ENCODE measurements at regions of chr10 and their contacts with region 1.

Region 1: DNA sequence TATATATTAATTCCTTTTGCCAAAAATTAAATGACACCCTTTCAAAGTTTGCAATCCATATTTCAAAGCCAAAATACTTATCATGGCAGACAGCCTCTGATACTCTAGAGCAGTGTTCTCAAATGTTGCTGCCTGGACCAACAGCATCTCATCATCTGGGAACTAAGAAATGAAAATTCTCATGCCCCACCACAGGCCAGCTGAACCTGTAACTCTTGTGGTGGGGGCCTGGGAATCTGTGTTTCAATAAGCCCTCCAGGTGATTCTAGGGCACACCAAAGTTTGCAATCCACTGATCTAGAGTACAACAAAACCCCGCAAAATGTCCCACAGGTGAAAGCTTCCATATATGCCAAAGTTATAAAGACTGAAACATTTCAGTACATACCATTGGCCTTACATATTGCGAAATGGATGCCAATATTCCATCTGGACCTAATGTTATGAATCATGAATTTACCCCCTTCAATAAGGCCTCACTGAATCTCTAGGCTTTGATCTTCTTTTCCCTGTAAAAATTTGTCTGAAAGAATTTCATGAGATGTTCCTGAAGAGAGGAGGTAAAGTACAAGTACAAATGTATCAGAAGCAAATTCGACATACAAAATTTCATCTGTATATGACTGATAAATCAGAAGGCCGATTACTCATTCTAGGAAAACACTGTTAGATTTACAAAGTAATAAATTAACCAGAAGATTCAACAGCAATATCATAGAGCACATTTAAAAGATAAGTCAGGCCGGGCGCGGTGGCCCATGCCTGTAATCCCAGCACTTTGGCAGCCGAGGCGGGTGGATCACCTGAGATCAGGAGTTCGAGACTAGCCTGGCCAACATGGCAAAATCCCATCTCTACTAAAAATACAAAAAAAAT is 25.3 kb upstream of the EPC1 start:
- DNase-seq: no peak
- ATAC-seq: no peak
- H3K4me3 Mint-ChIP-seq: no peak overlapping the region
- H3K27ac Mint-ChIP-seq: no peak overlapping the region
- H3K4me1 Mint-ChIP-seq: peaks cover 24% of the 10 kb centered on the region
- H3K27me3 Mint-ChIP-seq: no peaks in the 10 kb centered on the region

Region 2: GRCh38 chr10:31921031-31921430 is 451.2 kb before region 1 on chr10:
- POLR2A ChIA-PET with region 1: interaction called, 10 read pairs
- DNase-seq: no peak
- ATAC-seq: peak; percentile 75
- H3K4me3 Mint-ChIP-seq: peak overlapping the region; percentile 83
- H3K27ac Mint-ChIP-seq: peak overlapping the region; percentile 94
- H3K4me1 Mint-ChIP-seq: peaks cover 46% of the 10 kb centered on the region
- H3K27me3 Mint-ChIP-seq: no peaks in the 10 kb centered on the region

Region 3: GRCh38 chr10:32332299-32332750 is 39.9 kb before region 1 on chr10:
- POLR2A ChIA-PET with region 1: no interaction called
- DNase-seq: peak; percentile 48
- ATAC-seq: peak; percentile 99
- H3K4me3 Mint-ChIP-seq: peak overlapping the region; percentile 55
- H3K27ac Mint-ChIP-seq: peak overlapping the region; percentile 84
- H3K4me1 Mint-ChIP-seq: peaks cover 62% of the 10 kb centered on the region
- H3K27me3 Mint-ChIP-seq: no peaks in the 10 kb centered on the region

Region 4: GRCh38 chr10:32471232-32471631 is 99.0 kb after region 1 on chr10:
- POLR2A ChIA-PET with region 1: no interaction called
- DNase-seq: no peak
- ATAC-seq: no peak
- H3K4me3 Mint-ChIP-seq: no peak overlapping the region
- H3K27ac Mint-ChIP-seq: no peak overlapping the region
- H3K4me1 Mint-ChIP-seq: no peaks in the 10 kb centered on the region
- H3K27me3 Mint-ChIP-seq: no peaks in the 10 kb centered on the region

Measured in activated naive CD8-positive, alpha-beta T cell treated with anti-CD3 and anti-CD28 coated beads, Interleukin-2, amount 10 ng/mL, durations not matched to agents 7 days and 5 days (primary cell).